ENCODE measurements at regions of chr14 and their contacts with region 1.

Region 1: GRCh38 chr14:48744202-48744601 is 842.0 kb downstream of the RPS29 start:
- DNase-seq: no peak
- H3K4me3 ChIP-seq: no peak overlapping the region
- H3K27ac ChIP-seq: no peak overlapping the region
- H3K4me1 ChIP-seq: no peaks in the 10 kb centered on the region
- H3K27me3 ChIP-seq: no peaks in the 10 kb centered on the region
- CTCF ChIP-seq: no peak
- EP300 ChIP-seq: no peak
- POLR2A ChIP-seq: no peak

Region 2: GRCh38 chr14:48598458-48598857 is 145.7 kb before region 1 on chr14:
- in situ Hi-C with region 1: no loop called
- intact Hi-C with region 1: no loop called
- DNase-seq: no peak
- H3K4me3 ChIP-seq: no peak overlapping the region
- H3K27ac ChIP-seq: no peak overlapping the region
- H3K4me1 ChIP-seq: no peaks in the 10 kb centered on the region
- H3K27me3 ChIP-seq: no peaks in the 10 kb centered on the region
- CTCF ChIP-seq: no peak
- EP300 ChIP-seq: no peak
- POLR2A ChIP-seq: no peak

Region 3: DNA sequence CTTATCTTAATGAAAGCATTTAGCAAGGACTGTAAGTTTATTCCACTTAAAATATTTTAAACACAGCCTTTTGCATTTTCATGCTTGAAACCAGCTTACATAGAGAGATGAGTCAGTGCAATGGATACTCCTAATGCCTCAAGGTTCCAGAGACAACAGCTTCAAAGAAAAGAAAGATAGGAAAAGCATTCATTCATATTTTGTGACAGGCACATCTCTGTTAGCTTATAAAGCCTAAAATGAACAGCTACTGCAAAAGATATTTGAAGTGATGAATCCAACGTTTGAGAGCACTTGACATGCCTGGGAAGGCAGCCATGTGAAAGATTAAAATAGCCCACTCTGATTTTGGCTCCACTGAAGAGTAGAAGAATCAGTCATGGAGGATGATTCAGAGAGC is 27.5 kb after region 1 on chr14:
- in situ Hi-C with region 1: no loop called
- intact Hi-C with region 1: loop called (anchors 1 kb)
- DNase-seq: no peak
- H3K4me3 ChIP-seq: no peak overlapping the region
- H3K27ac ChIP-seq: no peak overlapping the region
- H3K4me1 ChIP-seq: no peaks in the 10 kb centered on the region
- H3K27me3 ChIP-seq: no peaks in the 10 kb centered on the region
- CTCF ChIP-seq: no peak
- EP300 ChIP-seq: no peak
- POLR2A ChIP-seq: no peak

Measured in transverse colon (tissue), 4 donors.